OCI-LY7 (cell line): ENCODE measurements at regions of chr5 and their contacts with region 1.

Region 1: DNA sequence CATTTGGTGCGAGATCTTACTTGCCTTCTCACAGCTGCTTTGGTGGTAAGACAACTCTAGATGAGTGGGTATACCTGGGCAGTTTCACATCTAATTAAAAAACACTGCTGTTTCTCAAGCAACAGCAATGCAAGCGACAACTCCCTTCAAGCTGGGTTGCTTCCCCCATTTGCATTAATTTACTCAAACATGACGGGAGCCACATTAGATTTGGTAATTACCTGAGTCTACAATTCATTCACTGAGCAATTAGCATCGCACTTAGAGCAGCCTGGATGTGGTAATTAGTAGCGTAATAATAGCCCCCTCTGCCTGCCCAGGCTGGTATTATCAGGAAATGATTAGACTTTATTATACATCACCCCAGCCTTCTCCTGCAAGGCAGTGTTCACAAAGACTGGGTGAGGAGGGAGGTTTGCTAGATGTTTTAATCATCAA is 73.4 kb downstream of the FBXO38 start:
- DNase-seq: peak; percentile 57
- H3K4me3 ChIP-seq: no peak overlapping the region
- H3K27ac ChIP-seq: no peak overlapping the region
- H3K4me1 ChIP-seq: no peaks in the 10 kb centered on the region
- CTCF ChIP-seq: peak; percentile 78

Region 2: GRCh38 chr5:148179234-148179824 is 277.9 kb before region 1 on chr5:
- CTCF ChIA-PET with region 1: no interaction called
- POLR2A ChIA-PET with region 1: interaction called, 4 read pairs
- intact Hi-C with region 1: loop called (anchors 1 kb)
- DNase-seq: peak; percentile 61
- H3K4me3 ChIP-seq: no peak overlapping the region
- H3K27ac ChIP-seq: no peak overlapping the region
- H3K4me1 ChIP-seq: no peaks in the 10 kb centered on the region
- CTCF ChIP-seq: peak; percentile 87

Region 3: GRCh38 chr5:148290271-148291195 is 166.7 kb before region 1 on chr5:
- CTCF ChIA-PET with region 1: no interaction called
- POLR2A ChIA-PET with region 1: no interaction called
- intact Hi-C with region 1: loop called (anchors 10 kb)
- DNase-seq: peak; percentile 12
- H3K4me3 ChIP-seq: no peak overlapping the region
- H3K27ac ChIP-seq: no peak overlapping the region
- H3K4me1 ChIP-seq: no peaks in the 10 kb centered on the region
- CTCF ChIP-seq: peak; percentile 60; the same call in 1 of the 2 replicates

Region 4: GRCh38 chr5:148408092-148408491 is 49.1 kb before region 1 on chr5:
- CTCF ChIA-PET with region 1: no interaction called
- POLR2A ChIA-PET with region 1: no interaction called
- intact Hi-C with region 1: no loop called
- DNase-seq: no peak
- H3K4me3 ChIP-seq: no peak overlapping the region
- H3K27ac ChIP-seq: no peak overlapping the region
- H3K4me1 ChIP-seq: peaks cover 11% of the 10 kb centered on the region
- CTCF ChIP-seq: no peak

Region 5: GRCh38 chr5:148511810-148512347 is 54.7 kb after region 1 on chr5:
- CTCF ChIA-PET with region 1: no interaction called
- POLR2A ChIA-PET with region 1: no interaction called
- intact Hi-C with region 1: no loop called
- DNase-seq: no peak
- H3K4me3 ChIP-seq: no peak overlapping the region
- H3K27ac ChIP-seq: no peak overlapping the region
- H3K4me1 ChIP-seq: no peaks in the 10 kb centered on the region
- CTCF ChIP-seq: no peak

Region 6: GRCh38 chr5:149035372-149035790 is 578.2 kb after region 1 on chr5:
- CTCF ChIA-PET with region 1: no interaction called
- POLR2A ChIA-PET with region 1: no interaction called
- intact Hi-C with region 1: loop called (anchors 10 kb)
- DNase-seq: peak; percentile 54
- H3K4me3 ChIP-seq: no peak overlapping the region
- H3K27ac ChIP-seq: no peak overlapping the region
- H3K4me1 ChIP-seq: no peaks in the 10 kb centered on the region
- CTCF ChIP-seq: peak; percentile 89